Astrocyte of the cerebellum (primary cell): ENCODE measurements at regions of chr3 and their contacts with region 1.

Region 1: GRCh38 chr3:118884748-118885206 is 149.9 kb downstream of the IGSF11 start:
- DNase-seq: peak; percentile 9
- H3K4me3 ChIP-seq: no peak overlapping the region
- CTCF ChIP-seq: peak; percentile 97

Region 2: GRCh38 chr3:118828351-118828750 is 56.4 kb before region 1 on chr3:
- in situ Hi-C with region 1: no loop called
- DNase-seq: no peak
- H3K4me3 ChIP-seq: no peak overlapping the region
- CTCF ChIP-seq: no peak

Region 3: GRCh38 chr3:119098619-119099222 is 213.9 kb after region 1 on chr3:
- in situ Hi-C with region 1: loop called (anchors 10 kb)
- DNase-seq: peak; percentile 15
- H3K4me3 ChIP-seq: no peak overlapping the region
- CTCF ChIP-seq: peak; percentile 67